OCI-LY7 (cell line): ENCODE measurements at regions of chr6 and their contacts with region 1.

Region 1: GRCh38 chr6:45714741-45715507 is 300.7 kb downstream of the CLIC5 start:
- DNase-seq: peak; percentile 75
- H3K4me3 ChIP-seq: no peak overlapping the region
- H3K27ac ChIP-seq: no peak overlapping the region
- H3K4me1 ChIP-seq: peaks cover 3% of the 10 kb centered on the region
- CTCF ChIP-seq: peak; percentile 86

Region 2: GRCh38 chr6:44655412-44656342 is 1059.2 kb before region 1 on chr6:
- CTCF ChIA-PET with region 1: no interaction called
- POLR2A ChIA-PET with region 1: no interaction called
- intact Hi-C with region 1: loop called (anchors 10 kb)
- DNase-seq: peak; percentile 36
- H3K4me3 ChIP-seq: no peak overlapping the region
- H3K27ac ChIP-seq: no peak overlapping the region
- H3K4me1 ChIP-seq: no peaks in the 10 kb centered on the region
- CTCF ChIP-seq: peak; percentile 93

Region 3: GRCh38 chr6:45421709-45422502 is 293.0 kb before region 1 on chr6:
- CTCF ChIA-PET with region 1: no interaction called
- POLR2A ChIA-PET with region 1: no interaction called
- intact Hi-C with region 1: loop called (anchors 10 kb)
- DNase-seq: peak; percentile 20
- H3K4me3 ChIP-seq: peak overlapping the region; percentile 52
- H3K27ac ChIP-seq: no peak overlapping the region
- H3K4me1 ChIP-seq: peaks cover 34% of the 10 kb centered on the region
- CTCF ChIP-seq: 0 out of 2 replicates have a peak, but pooled peaks have one; percentile 16

Region 4: DNA sequence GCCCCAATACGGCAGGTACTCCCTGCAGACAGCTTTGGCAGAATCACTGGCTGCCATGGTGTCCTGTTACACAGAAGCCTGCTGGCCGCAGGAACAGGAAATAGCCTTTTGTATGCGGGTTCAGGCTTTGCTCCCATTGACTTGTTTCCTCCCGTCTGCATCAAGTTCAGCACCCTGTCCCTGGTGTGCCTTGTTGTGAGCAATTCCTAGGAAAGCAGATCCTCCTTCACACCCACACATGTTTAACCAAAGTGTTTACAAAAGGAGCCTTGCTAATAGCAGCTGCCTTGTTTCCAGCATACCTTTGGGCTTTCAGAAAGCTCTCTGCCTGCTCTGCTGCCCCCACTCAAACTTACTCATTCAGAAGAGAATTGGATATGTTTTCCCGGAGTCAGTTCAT is 210.0 kb before region 1 on chr6:
- CTCF ChIA-PET with region 1: no interaction called
- POLR2A ChIA-PET with region 1: no interaction called
- intact Hi-C with region 1: loop called (anchors 10 kb)
- DNase-seq: no peak
- H3K4me3 ChIP-seq: no peak overlapping the region
- H3K27ac ChIP-seq: no peak overlapping the region
- H3K4me1 ChIP-seq: no peaks in the 10 kb centered on the region
- CTCF ChIP-seq: no peak

Region 5: DNA sequence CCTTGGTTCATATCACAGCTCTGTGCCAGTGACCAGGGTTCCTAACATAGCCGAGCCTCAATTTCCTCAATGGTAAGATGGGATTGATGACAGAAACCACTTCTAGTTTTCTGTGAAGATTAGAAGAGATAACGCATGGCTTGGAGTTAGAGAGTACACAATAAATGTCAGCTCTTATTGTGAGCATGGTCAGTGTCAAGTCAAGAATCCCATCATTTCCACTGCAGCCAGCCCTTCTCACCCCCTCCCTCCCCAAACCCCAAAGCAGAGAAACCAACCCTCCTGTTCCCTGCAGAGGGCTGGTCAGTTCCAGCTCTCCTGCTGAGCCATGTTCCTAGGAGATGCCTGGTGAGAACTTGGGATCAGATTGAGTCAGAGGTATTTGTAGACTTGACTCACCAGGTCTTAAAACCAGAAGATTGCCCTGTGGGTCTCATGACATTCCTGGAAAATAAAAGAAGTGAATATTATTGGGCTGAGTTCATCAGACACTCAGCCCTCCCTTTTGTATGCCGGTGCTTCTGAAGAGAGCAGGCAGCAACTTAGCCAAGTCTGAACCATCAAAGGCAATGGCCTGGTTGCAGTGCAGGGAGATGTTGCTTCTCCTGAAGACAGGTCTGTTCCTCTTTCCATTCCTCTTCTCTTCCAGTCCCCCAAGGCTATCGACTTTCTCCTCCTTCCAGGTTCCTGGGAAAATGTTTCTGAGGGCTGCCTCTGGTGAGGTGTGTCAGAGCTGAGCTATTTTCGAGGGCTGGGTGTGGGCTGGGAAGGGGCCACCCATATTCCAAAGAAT is 59.1 kb before region 1 on chr6:
- CTCF ChIA-PET with region 1: no interaction called
- POLR2A ChIA-PET with region 1: no interaction called
- intact Hi-C with region 1: no loop called
- DNase-seq: no peak
- H3K4me3 ChIP-seq: no peak overlapping the region
- H3K27ac ChIP-seq: no peak overlapping the region
- H3K4me1 ChIP-seq: peaks cover 35% of the 10 kb centered on the region
- CTCF ChIP-seq: no peak